ENCODE measurements at regions of chr17 and their contacts with region 1.

Region 1: GRCh38 chr17:77319211-77320043 is 178.7 kb downstream of the SEC14L1 start:
- DNase-seq: peak; percentile 75 to 97
- H3K4me3 ChIP-seq: peak overlapping the region; percentile 59 to 64
- H3K27ac ChIP-seq: peak overlapping the region; percentile 92 to 98
- H3K4me1 ChIP-seq: peaks cover 34 to 59% of the 10 kb centered on the region in 2 donors
- H3K27me3 ChIP-seq: no peaks in the 10 kb centered on the region
- CTCF ChIP-seq: no peak

Region 2: DNA sequence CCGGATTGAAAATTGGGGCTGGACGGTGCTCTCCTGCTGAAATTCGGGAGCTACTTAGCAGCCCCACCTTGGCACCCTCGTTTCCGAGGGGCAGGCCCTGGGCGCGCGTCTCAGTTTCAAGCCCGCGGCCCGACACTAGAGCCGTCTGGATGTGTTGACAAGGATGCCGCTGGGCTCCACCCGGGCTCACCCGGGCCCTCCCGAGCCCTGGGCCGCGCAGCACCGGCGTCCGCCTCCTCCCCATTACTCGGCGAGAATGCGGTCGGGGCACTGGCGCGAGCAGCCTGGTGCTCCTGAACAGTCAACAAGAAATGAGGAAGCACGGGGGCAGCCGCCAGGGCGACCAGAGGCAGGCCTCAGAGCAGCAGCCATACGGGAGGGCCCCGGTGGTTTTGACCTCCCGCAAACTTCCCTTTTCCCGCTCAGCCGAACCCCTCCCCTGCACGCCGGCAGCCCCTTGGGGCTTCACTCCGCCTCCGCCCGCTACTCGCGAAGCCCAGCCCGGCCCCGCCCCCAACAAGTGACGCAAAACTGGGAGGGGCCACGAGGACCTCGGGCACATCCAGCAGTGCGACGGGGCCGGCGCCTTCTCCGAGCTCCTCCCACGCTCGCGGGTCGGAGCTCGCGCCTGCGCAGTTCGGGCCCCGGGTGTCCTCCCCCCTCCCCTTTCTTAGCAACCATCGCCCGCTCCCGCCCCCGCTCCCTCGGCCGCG is 179.1 kb before region 1 on chr17:
- intact Hi-C with region 1: loop called (anchors 2 kb)
- DNase-seq: peak; percentile 95 to 100
- H3K4me3 ChIP-seq: peak overlapping the region; percentile 92 to 93
- H3K27ac ChIP-seq: peak overlapping the region; percentile 93
- H3K4me1 ChIP-seq: peaks cover 0 to 8% of the 10 kb centered on the region in 2 donors
- H3K27me3 ChIP-seq: no peaks in the 10 kb centered on the region
- CTCF ChIP-seq: no peak

Region 3: DNA sequence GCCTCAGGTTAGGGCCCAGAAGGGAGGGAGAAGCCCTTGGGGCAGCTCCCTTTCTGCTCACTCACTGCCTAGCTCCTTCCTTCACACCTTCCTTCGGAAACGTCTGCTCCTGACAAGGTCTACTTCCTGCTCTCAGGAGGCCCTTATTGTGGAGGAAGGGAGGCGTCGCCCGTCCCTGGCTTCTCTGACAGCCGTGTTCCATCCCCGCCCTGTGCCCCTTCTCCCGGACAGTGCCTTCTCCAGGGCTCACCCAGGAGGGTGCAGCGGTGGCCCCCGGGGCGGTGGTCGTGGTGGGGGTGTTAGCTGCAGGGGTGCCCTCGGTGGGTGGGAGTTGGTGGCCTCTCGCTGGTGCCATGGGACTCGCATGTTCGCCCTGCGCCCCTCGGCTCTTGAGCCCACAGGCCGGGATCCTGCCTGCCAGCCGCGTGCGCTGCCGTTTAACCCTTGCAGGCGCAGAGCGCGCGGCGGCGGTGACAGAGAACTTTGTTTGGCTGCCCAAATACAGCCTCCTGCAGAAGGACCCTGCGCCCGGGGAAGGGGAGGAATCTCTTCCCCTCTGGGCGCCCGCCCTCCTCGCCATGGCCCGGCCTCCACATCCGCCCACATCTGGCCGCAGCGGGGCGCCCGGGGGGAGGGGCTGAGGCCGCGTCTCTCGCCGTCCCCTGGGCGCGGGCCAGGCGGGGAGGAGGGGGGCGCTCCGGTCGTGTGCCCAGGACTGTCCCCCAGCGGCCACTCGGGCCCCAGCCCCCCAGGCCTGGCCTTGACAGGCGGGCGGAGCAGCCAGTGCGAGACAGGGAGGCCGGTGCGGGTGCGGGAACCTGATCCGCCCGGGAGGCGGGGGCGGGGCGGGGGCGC is 53.2 kb after region 1 on chr17:
- intact Hi-C with region 1: loop called (anchors 2 kb)
- DNase-seq: peak; percentile 59 to 90
- H3K4me3 ChIP-seq: peak overlapping the region; percentile 80 to 84
- H3K27ac ChIP-seq: peak overlapping the region; percentile 92
- H3K4me1 ChIP-seq: peaks cover 29 to 53% of the 10 kb centered on the region in 2 donors
- H3K27me3 ChIP-seq: no peaks in the 10 kb centered on the region
- CTCF ChIP-seq: no peak

Region 4: GRCh38 chr17:77476931-77477877 is 157.8 kb after region 1 on chr17:
- intact Hi-C with region 1: loop called (anchors 5 kb)
- DNase-seq: peak; percentile 73 to 96
- H3K4me3 ChIP-seq: peak overlapping the region in 1 of 2 donors; percentile 14
- H3K27ac ChIP-seq: peak overlapping the region; percentile 84 to 92
- H3K4me1 ChIP-seq: peaks cover 21 to 48% of the 10 kb centered on the region in 2 donors
- H3K27me3 ChIP-seq: no peaks in the 10 kb centered on the region
- CTCF ChIP-seq: peak in 1 of 3 experiments; percentile 12

Region 5: DNA sequence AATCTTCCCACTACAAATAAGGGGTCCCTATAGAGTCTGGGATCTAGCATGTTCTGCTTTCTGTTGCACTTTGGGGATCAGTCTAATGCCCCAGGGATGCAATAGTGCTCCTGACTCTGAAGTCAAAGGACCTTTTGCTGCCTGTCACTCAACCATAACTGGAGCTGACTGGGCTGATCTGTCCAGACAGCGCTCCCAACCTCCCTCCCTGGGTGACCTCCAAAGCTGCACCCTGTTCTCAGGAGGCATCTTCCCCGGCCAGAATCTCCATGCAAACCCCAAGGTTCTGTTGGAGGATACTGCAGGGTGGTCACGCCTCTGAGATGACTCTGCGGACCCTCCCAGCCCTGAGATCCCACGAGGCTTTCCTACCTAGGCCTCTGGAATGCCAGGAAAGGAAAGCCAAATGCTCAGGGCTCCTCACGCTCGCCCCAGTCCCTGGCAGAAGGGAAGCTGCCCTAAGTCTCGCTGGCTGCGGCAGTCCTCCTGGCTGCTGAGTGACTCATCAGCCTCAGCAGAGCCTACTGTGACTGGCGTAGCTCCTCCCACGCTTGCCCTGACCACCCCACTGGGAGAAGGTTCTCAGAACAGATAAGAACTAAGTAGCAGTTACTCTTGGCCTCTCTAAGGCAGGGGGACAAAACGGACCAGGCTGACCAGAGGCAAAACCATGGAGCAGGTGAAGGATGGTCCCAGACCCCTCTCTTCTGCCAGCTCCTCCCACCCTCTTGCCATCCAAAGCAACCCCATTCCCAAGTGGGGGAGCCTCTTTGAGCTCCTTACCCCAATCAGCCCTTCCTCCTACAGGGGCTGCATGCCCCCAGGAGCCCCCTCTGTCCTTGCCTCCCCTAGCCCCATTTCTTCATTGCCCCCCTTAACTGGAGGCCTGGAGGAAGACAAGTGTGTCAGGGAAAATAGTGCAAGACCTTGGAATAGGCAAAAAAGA is 515.0 kb after region 1 on chr17:
- intact Hi-C with region 1: loop called (anchors 5 kb)
- DNase-seq: peak; percentile 64 to 91
- H3K4me3 ChIP-seq: no peak overlapping the region
- H3K27ac ChIP-seq: peak overlapping the region; percentile 66 to 70
- H3K4me1 ChIP-seq: peaks cover 18 to 39% of the 10 kb centered on the region in 2 donors
- H3K27me3 ChIP-seq: no peaks in the 10 kb centered on the region
- CTCF ChIP-seq: no peak

Region 6: DNA sequence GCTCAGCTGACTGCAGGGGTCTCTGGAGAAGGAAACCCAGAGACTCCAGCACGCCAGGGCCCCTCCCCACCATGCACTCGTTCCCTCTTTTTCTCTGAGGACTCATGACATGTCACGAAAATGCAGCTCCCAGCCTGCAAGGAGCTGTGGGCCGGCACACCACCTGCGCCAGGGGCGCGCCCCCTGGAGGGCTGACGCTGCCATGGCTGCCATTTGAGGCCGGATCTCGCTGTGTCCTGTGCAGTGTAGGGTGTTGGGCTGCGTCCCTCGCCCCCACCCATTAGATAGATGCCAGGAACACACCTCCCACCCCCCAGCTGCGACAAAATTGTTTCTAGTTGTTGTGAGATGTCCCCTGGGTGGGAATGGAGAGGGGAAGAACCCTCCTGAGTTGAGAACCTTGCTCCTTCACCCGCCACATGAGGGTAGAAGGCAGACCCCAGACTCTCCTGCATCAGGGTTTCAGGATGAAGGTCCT is 857.2 kb after region 1 on chr17:
- intact Hi-C with region 1: loop called (anchors 10 kb)
- DNase-seq: peak in 1 of 2 donors; percentile 84
- H3K4me3 ChIP-seq: no peak overlapping the region
- H3K27ac ChIP-seq: peak overlapping the region; percentile 81 to 89
- H3K4me1 ChIP-seq: peaks cover 10 to 73% of the 10 kb centered on the region in 2 donors
- H3K27me3 ChIP-seq: no peaks in the 10 kb centered on the region
- CTCF ChIP-seq: peak; percentile 64 to 81 (median 78)

Measured in ascending aorta (tissue), 2 donors.